ENCODE measurements at regions of chr2 and their contacts with region 1.

Region 1: DNA sequence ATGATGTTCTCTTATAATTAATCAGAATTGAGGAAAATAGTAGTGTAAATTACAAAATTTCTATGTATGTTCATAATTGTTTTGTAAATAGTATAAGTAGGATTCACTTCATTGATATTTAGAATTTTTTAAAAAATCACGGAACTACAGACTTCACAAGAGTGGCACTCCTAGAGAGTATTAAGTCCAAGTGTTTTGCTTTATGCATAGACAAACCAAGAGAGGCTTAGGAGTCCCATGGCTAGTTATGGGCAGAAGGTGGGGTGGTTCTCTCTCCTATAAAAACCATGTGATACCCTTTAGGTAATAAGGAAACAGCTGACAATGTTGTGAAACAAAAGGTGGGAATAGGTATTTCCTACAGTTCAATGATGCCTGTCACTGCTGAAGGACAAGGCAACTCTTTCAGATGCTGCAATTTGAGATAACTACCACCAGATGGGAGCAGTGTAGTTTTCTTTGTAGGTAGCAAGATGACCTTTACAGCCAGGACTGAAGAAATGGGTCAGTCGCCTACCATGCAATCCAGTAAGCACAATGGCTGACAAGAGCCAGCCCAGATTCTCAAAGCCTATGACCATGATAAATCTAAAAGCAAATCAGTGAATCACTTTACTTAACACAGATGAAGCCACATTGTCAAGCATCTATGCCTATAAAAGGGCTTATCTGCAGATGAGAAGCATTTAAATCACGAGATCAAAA is 83.9 kb downstream of the AAK1 start:
- ATAC-seq: peak; percentile 18 to 93 (median 76)
- H3K4me3 ChIP-seq: no peak overlapping the region
- H3K27ac ChIP-seq: no peak overlapping the region
- H3K4me1 ChIP-seq: no peaks in the 10 kb centered on the region

Region 2: GRCh38 chr2:69704446-69704845 is 144.9 kb after region 1 on chr2:
- in situ Hi-C with region 1: loop called in 3 of 9 experiments (anchors 10 to 25 kb)
- ATAC-seq: no peak
- H3K4me3 ChIP-seq: no peak overlapping the region
- H3K27ac ChIP-seq: no peak overlapping the region
- H3K4me1 ChIP-seq: no peaks in the 10 kb centered on the region

Measured in motor neuron (in vitro differentiated cells).